ENCODE measurements at regions of chr12 and their contacts with region 1.

Region 1: DNA sequence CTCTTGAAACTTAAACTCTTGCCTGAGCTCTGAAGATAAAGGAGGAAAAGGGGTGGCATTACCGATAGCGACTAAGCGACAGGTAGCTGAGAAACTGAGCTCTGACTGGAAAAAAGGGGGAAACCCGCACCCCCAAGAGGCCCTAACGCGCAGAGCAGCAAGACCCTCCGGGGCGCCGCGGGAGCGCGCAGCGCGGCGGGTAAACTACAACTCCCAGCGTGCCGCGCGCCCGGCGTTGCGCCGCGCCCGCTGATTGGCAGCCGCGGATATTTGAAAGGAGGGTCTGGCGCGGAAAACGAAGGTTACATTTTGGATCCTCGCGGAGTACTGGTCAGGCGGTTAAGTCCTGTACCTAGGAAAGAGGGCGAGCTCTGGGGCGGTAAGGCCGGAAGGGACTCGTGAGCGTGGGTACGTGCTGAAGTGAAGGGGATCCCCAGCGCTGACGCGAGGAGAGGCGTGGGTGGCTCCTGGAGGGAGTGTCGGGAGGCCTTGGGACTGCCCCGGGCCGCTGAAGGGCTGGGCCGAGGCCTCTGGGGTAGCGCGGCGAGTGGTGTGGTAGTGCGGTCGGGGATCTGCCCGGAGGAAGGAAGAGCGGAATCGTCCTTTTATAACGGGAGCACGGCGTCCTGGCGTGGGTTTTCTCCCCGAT is at the start of gene ESPL1:
- DNase-seq: peak; percentile 94
- H3K4me3 ChIP-seq: peak within 1 kb of the TSS; percentile 87
- H3K27ac ChIP-seq: peak within 1 kb of the TSS; percentile 56
- H3K4me1 ChIP-seq: peaks cover 31% of the 10 kb centered on the region
- CTCF ChIP-seq: peak; percentile 83
- total RNA-seq, gene ESPL1: 77.4 and 78.2 TPM in 2 replicates

Region 2: DNA sequence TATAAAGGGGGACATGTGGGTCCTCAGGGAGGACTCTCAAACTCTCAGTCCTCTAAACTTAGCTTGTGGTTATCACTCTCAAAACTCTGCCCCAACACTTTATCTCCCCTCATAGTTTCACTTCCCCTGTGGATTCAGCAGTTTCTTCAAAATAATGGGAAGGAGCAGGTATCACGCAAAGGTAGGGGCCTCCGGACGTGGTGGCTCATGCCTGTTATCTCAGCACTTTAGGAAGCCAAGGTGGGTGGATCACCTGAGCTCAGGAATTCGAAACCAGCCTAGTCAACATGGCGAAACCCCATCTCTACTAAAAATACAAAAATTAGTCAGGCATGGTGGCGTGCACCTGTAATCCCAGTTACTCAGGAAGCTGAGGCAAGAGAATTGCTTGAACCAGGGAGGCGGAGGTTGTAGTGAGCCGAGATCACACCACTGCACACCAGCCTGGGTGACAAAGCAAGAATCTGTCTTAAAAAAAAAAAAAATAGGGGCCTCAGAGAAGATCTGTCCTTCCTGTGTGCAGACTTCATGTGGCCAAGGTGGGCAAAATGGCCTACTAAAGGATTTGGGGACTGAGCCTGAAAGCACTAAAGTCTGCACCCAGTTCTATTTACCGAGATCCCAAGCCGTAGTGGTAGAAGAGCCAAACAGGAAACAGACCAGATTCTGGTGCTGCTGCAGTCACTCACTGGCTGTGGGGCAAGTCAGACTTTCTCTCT is 67.5 kb before region 1 on chr12:
- CTCF ChIA-PET with region 1: interaction called, 3 read pairs
- POLR2A ChIA-PET with region 1: interaction called, 13 read pairs
- intact Hi-C with region 1: no loop called
- DNase-seq: peak; percentile 81
- H3K4me3 ChIP-seq: peak overlapping the region; percentile 55
- H3K27ac ChIP-seq: peak overlapping the region; percentile 98
- H3K4me1 ChIP-seq: peaks cover 78% of the 10 kb centered on the region
- CTCF ChIP-seq: no peak

Region 3: GRCh38 chr12:53213348-53213747 is 54.8 kb before region 1 on chr12:
- CTCF ChIA-PET with region 1: interaction called, 80 read pairs
- POLR2A ChIA-PET with region 1: interaction called, 43 read pairs
- intact Hi-C with region 1: loop called (anchors 1 kb)
- DNase-seq: peak; percentile 86
- H3K4me3 ChIP-seq: no peak overlapping the region
- H3K27ac ChIP-seq: no peak overlapping the region
- H3K4me1 ChIP-seq: peaks cover 87% of the 10 kb centered on the region
- CTCF ChIP-seq: peak; percentile 94

Region 4: DNA sequence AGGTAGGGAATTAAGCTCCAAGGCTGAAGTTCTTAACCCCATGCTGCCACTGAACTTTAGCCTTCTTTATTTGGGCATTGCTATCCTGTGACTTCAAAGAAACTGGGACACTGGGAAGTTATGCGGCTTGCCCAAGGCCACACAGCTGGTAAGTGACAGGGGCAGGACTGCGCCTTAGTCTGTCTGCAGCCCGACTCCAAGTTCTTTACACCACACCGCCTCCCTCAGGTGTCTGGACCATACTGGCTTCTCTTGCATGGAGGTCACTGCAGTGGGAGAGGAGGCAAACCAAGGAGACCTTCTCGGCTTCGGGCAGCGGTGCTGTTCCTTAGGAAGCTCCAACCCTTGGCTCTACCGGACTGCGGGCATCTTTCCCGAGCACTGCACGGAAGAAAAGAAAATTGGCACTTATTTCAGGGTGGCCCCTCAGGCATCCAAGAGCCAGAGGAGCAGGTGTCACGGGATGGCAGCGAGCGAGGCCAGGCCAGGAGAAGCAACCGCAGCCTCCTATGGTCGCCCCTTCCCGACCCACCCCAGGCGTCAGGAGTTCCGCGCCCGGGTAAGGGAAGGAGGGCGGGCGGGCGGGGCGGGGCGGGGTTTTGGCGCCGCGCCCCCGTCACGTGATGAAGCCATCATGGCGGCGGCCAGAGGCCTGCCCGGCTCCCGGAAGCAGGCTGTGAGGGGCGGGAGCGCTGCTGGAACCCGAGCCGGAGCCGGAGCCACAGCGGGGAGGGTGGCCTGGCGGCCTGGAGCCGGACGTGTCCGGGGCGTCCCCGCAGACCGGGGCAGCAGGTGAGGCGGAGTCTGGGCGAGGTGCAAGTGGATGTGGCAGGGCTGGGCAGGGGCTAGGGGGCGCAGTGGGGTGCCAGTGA is 16.4 kb before region 1 on chr12:
- CTCF ChIA-PET with region 1: interaction called, 4 read pairs
- POLR2A ChIA-PET with region 1: interaction called, 20 read pairs
- intact Hi-C with region 1: no loop called
- DNase-seq: peak; percentile 84
- H3K4me3 ChIP-seq: peak overlapping the region; percentile 91
- H3K27ac ChIP-seq: peak overlapping the region; percentile 48
- H3K4me1 ChIP-seq: peaks cover 32% of the 10 kb centered on the region
- CTCF ChIP-seq: peak; percentile 66

Region 5: DNA sequence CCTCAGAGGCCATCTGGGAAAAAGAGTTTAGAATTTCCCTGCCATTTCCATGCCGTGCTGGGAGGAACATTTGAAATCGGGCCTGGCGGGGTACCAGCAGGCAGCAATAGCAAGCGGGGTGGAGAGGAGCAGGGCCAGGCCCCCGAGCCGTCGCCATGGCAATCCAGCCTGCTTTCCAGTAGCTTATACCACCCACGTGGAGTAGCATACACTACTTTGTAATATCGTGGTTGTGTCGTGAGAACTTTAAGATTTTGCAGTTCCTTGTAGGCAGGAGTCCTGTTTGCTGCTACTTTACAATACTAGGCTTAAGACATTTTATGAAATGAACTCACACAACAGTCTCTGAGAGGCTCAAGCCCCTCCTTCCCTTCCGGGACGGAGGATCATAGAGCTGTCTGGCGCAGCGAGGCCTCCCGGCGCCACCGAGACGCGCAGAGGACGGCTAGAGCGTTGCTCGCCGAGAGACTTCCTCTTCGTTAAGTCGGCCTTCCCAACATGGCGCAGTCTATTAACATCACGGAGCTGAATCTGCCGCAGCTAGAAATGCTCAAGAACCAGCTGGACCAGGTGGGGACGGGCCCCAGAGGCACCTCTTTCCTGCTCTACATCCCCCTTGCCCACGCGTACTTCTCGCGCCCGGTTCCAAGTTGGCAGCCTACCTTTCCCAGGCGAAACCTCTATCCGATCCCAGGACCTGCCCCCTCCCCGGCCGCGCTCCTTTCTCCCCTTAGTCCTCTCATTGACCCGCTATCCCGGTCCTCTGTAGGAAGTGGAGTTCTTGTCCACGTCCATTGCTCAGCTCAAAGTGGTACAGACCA is 27.2 kb after region 1 on chr12 and contains the start of gene PFDN5:
- CTCF ChIA-PET with region 1: interaction called, 3 read pairs
- POLR2A ChIA-PET with region 1: interaction called, 17 read pairs
- intact Hi-C with region 1: loop called (anchors 2 kb)
- DNase-seq: peak; percentile 91
- H3K4me3 ChIP-seq: peak within 1 kb of the TSS; percentile 92
- H3K27ac ChIP-seq: peak within 1 kb of the TSS; percentile 48
- H3K4me1 ChIP-seq: peaks cover 24% of the 10 kb centered on the region
- CTCF ChIP-seq: no peak
- total RNA-seq, gene PFDN5: 348 and 394 TPM in 2 replicates

Region 6: DNA sequence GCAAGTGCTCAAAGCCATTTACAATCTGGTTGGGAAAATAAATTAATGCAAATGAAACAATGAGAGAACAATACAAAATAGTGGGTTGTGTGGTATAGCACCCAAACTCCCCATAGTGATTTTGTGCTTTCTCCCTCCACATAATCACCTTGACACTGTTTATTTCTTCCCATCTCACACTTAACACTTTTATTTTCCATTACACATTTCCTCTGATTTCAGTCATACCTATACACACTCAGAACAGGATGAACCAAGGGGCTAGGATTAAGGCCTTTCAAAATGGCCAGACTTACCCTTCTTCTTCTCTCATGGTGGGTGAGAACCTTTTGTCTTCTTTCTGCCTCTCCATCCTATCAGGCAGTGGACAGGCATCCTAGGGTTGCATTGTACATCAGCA is 1267.4 kb after region 1 on chr12:
- CTCF ChIA-PET with region 1: no interaction called
- POLR2A ChIA-PET with region 1: no interaction called
- intact Hi-C with region 1: no loop called
- DNase-seq: no peak
- H3K4me3 ChIP-seq: no peak overlapping the region
- H3K27ac ChIP-seq: no peak overlapping the region
- H3K4me1 ChIP-seq: no peaks in the 10 kb centered on the region
- CTCF ChIP-seq: no peak